Activated T-helper 1 cell treated with anti-CD3 and anti-CD28 coated beads, Interleukin-12 subunit alpha, Interleukin-12 subunit beta, Interleukin-2, Interleukin-4 antibody, amounts not matched to agents 30 ng/mL and 10 ng/mL and 1 ng/mL, durations not matched to agents 14 hours and 24 hours and 36 hours (primary cell): ENCODE measurements at regions of chr2 and their contacts with region 1.

Region 1: GRCh38 chr2:196239622-196240587 is 68.5 kb upstream of the STK17B start:
- DNase-seq: peak; percentile 83
- H3K4me3 Mint-ChIP-seq: peak overlapping the region; percentile 60
- H3K27ac Mint-ChIP-seq: peak overlapping the region; percentile 97
- H3K4me1 Mint-ChIP-seq: peaks cover 76% of the 10 kb centered on the region
- H3K27me3 Mint-ChIP-seq: no peaks in the 10 kb centered on the region

Region 2: DNA sequence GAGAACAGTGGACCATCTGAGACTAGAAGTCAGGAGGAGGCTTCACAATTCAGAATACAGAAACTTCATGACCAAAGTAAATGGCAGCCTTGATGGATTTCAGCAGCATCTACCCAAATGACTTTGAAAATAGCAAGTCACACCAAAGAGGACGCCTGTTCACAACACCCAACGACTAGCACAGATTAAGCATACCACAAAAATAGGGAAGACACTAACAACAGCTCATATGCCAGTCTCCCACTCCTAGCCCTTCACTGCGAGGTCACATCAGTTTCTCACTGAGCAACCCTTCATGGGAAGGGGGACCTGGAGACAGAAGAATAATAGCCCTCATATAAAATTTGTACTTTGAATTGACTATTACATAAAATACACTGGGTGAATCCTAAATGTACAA is 811.2 kb before region 1 on chr2:
- intact Hi-C with region 1: no loop called
- DNase-seq: no peak
- H3K4me3 Mint-ChIP-seq: no peak overlapping the region
- H3K27ac Mint-ChIP-seq: no peak overlapping the region
- H3K4me1 Mint-ChIP-seq: no peaks in the 10 kb centered on the region
- H3K27me3 Mint-ChIP-seq: no peaks in the 10 kb centered on the region

Region 3: DNA sequence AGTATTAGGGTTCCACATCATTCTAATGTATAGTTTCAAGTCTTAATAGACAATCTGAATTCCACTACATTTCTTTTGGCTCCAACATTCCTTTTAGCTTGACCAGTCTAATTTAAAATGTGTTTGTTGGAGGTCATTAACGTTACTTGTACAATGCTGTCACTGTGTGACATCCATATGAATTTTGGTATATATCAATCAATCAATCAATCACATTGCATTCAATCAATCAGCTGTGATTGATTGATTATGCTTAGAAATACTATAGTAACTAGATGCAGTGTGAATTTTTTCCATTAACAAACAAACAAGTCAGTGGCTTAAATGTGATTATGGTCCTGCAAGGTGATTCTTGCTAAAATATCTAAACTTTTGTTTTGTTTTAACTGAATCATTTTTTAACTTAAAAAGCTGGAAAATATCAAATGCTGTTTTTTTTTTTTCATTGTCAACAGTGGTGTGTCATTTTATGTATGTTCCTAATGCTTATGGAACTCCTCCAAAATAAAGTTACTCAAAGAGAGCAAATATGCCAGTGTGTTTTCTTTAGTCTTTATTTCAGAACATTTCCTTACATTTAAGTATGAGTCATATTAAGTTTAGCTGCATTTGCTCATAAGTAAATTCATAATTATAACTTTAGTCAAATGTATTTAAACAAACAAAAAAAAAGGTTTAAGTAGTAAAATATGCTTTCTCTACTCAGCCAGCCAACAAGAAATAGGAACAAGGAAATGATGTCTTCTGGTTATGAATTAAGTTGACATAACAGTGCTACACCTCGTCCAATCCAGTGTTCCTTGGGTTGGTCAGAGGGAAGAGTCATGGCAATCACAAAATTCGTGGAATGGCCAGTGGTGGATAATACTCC is 502.5 kb before region 1 on chr2:
- intact Hi-C with region 1: no loop called
- DNase-seq: no peak
- H3K4me3 Mint-ChIP-seq: no peak overlapping the region
- H3K27ac Mint-ChIP-seq: no peak overlapping the region
- H3K4me1 Mint-ChIP-seq: no peaks in the 10 kb centered on the region
- H3K27me3 Mint-ChIP-seq: no peaks in the 10 kb centered on the region

Region 4: DNA sequence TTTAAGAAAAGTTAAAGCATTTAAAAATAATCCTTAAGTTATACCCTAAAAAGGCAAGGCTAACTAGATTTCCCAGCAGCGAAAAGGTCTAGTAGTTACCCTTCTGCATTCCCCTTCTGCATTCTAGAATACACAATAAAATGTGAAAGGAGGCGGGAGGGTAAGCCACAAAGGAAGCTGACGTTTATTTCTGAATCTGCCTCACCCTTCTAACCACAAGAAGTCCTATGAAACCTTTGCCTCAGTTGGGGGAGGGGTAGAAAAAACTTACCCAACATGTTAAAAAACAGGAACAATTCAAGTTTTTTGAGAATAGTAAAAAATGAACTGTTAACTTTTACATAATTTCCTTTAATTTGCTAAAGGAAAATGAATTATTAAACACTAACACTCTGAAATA is 79.8 kb before region 1 on chr2:
- intact Hi-C with region 1: loop called (anchors 1 kb)
- DNase-seq: peak; percentile 74
- H3K4me3 Mint-ChIP-seq: peak overlapping the region; percentile 76
- H3K27ac Mint-ChIP-seq: peak overlapping the region; percentile 93
- H3K4me1 Mint-ChIP-seq: peaks cover 91% of the 10 kb centered on the region
- H3K27me3 Mint-ChIP-seq: no peaks in the 10 kb centered on the region

Region 5: GRCh38 chr2:196205881-196206435 is 33.9 kb before region 1 on chr2:
- intact Hi-C with region 1: loop called (anchors 1 kb)
- DNase-seq: no peak
- H3K4me3 Mint-ChIP-seq: no peak overlapping the region
- H3K27ac Mint-ChIP-seq: no peak overlapping the region
- H3K4me1 Mint-ChIP-seq: peaks cover 46% of the 10 kb centered on the region
- H3K27me3 Mint-ChIP-seq: no peaks in the 10 kb centered on the region

Region 6: GRCh38 chr2:196268538-196269338 is 28.8 kb after region 1 on chr2:
- intact Hi-C with region 1: loop called (anchors 1 kb)
- DNase-seq: no peak
- H3K4me3 Mint-ChIP-seq: peak overlapping the region; percentile 25
- H3K27ac Mint-ChIP-seq: peak overlapping the region; percentile 29
- H3K4me1 Mint-ChIP-seq: peaks cover 57% of the 10 kb centered on the region
- H3K27me3 Mint-ChIP-seq: no peaks in the 10 kb centered on the region

Region 7: GRCh38 chr2:196291873-196292800 is 52.2 kb after region 1 on chr2:
- intact Hi-C with region 1: loop called (anchors 1 kb)
- DNase-seq: no peak
- H3K4me3 Mint-ChIP-seq: no peak overlapping the region
- H3K27ac Mint-ChIP-seq: no peak overlapping the region
- H3K4me1 Mint-ChIP-seq: peaks cover 52% of the 10 kb centered on the region
- H3K27me3 Mint-ChIP-seq: no peaks in the 10 kb centered on the region